ENCODE measurements at regions of chr9 and their contacts with region 1.

Region 1: GRCh38 chr9:6106576-6107339 is 91.3 kb upstream of the RANBP6 start:
- DNase-seq: peak; percentile 34
- ATAC-seq: peak; percentile 82
- H3K4me3 ChIP-seq: no peak overlapping the region
- H3K27ac ChIP-seq: 0 out of 2 replicates have a peak overlapping the region, but pooled peaks have one; percentile 22
- H3K4me1 ChIP-seq: peaks cover 15 to 41% of the 10 kb centered on the region in 2 experiments
- H3K27me3 ChIP-seq: no peaks in the 10 kb centered on the region
- CTCF ChIP-seq: peak; percentile 42 to 76 (median 54); a peak in 5 of 6 replicates
- POLR2A ChIP-seq: no peak
- RAD21 ChIP-seq: peak; percentile 50

Region 2: GRCh38 chr9:6029604-6030274 is 77.0 kb before region 1 on chr9:
- CTCF ChIA-PET with region 1: no interaction called
- POLR2A ChIA-PET with region 1: no interaction called
- RAD21 ChIA-PET with region 1: no interaction called
- intact Hi-C with region 1: no loop called
- DNase-seq: no peak
- ATAC-seq: no peak
- H3K4me3 ChIP-seq: no peak overlapping the region
- H3K27ac ChIP-seq: no peak overlapping the region
- H3K4me1 ChIP-seq: no peaks in the 10 kb centered on the region
- H3K27me3 ChIP-seq: no peaks in the 10 kb centered on the region
- CTCF ChIP-seq: no peak
- POLR2A ChIP-seq: no peak
- RAD21 ChIP-seq: no peak

Region 3: GRCh38 chr9:6123416-6123815 is 16.7 kb after region 1 on chr9:
- CTCF ChIA-PET with region 1: interaction called, 12 read pairs
- POLR2A ChIA-PET with region 1: no interaction called
- RAD21 ChIA-PET with region 1: no interaction called
- intact Hi-C with region 1: no loop called
- DNase-seq: no peak
- ATAC-seq: no peak
- H3K4me3 ChIP-seq: no peak overlapping the region
- H3K27ac ChIP-seq: no peak overlapping the region
- H3K4me1 ChIP-seq: no peaks in the 10 kb centered on the region
- H3K27me3 ChIP-seq: no peaks in the 10 kb centered on the region
- CTCF ChIP-seq: no peak
- POLR2A ChIP-seq: no peak
- RAD21 ChIP-seq: no peak

Region 4: DNA sequence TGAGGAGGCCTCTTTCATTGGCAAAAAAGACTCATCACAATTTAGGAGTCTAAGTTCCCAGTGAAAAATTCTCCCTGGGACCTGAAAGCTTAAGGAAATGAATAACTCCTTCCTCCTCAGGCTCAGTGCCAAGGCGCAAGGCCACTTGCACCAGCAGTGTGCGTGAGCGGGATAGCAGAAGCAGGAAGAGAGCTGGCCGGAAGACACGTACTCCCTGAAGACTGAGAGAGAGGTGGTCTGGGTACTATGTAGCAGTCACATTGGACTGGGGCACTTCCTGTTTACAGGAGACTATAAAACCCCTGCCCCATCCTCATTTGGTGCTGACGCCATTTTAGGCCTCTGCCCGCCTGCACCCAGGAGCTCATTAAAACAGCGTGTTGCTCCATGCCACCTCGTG is 42.6 kb after region 1 on chr9:
- CTCF ChIA-PET with region 1: no interaction called
- POLR2A ChIA-PET with region 1: no interaction called
- RAD21 ChIA-PET with region 1: no interaction called
- intact Hi-C with region 1: no loop called
- DNase-seq: no peak
- ATAC-seq: no peak
- H3K4me3 ChIP-seq: no peak overlapping the region
- H3K27ac ChIP-seq: no peak overlapping the region
- H3K4me1 ChIP-seq: peaks cover 0 to 8% of the 10 kb centered on the region in 2 experiments; a peak in 1 of 4 replicates
- H3K27me3 ChIP-seq: no peaks in the 10 kb centered on the region
- CTCF ChIP-seq: no peak
- POLR2A ChIP-seq: no peak
- RAD21 ChIP-seq: no peak

Measured in HCT116 (cell line).